ENCODE measurements at regions of chr19 and their contacts with region 1.

Region 1: GRCh38 chr19:6021878-6022569 is 44.1 kb upstream of the RANBP3 start:
- DNase-seq: peak; percentile 21
- H3K4me3 ChIP-seq: no peak overlapping the region
- H3K27ac ChIP-seq: no peak overlapping the region
- H3K27me3 ChIP-seq: peaks cover 4% of the 10 kb centered on the region
- CTCF ChIP-seq: peak; percentile 60

Region 2: GRCh38 chr19:5790573-5791520 is 231.2 kb before region 1 on chr19 and contains the start of gene DUS3L:
- CTCF ChIA-PET with region 1: interaction called, 15 read pairs
- POLR2A ChIA-PET with region 1: no interaction called
- DNase-seq: peak; percentile 96
- H3K4me3 ChIP-seq: peak within 1 kb of the TSS; percentile 99
- H3K27ac ChIP-seq: peak within 1 kb of the TSS; percentile 95
- H3K27me3 ChIP-seq: no peaks in the 10 kb centered on the region
- CTCF ChIP-seq: no peak
- polyA plus RNA-seq, gene DUS3L: 7.8 and 8.0 TPM in 2 replicates

Region 3: GRCh38 chr19:5987077-5987818 is 34.8 kb before region 1 on chr19:
- CTCF ChIA-PET with region 1: interaction called, 38 read pairs
- POLR2A ChIA-PET with region 1: interaction called, 3 read pairs
- DNase-seq: peak; percentile 51
- H3K4me3 ChIP-seq: peak overlapping the region; percentile 53
- H3K27ac ChIP-seq: no peak overlapping the region
- H3K27me3 ChIP-seq: no peaks in the 10 kb centered on the region
- CTCF ChIP-seq: peak; percentile 95

Region 4: GRCh38 chr19:6011794-6012193 is 10.2 kb before region 1 on chr19:
- CTCF ChIA-PET with region 1: interaction called, 10 read pairs
- POLR2A ChIA-PET with region 1: no interaction called
- DNase-seq: no peak
- H3K4me3 ChIP-seq: no peak overlapping the region
- H3K27ac ChIP-seq: peak overlapping the region; percentile 31
- H3K27me3 ChIP-seq: no peaks in the 10 kb centered on the region
- CTCF ChIP-seq: no peak

Region 5: DNA sequence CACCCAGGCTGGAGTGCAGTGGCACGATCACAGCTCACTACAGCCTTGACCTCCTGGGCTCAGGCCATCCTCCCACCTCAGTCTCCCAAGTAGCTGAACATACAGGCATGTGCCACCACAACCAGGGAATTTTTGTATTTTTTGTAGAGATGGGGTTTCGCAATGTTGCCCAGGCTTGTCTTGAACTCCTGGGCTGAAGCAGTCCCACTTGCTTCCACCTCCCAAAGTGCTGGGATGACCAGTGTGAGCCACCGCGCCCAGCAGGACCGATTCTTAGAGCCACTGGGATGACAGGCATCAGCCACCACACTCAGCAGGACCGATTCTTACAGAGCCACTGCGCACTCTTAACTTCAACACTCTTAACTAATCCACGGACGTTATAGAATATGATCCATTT is 10.8 kb after region 1 on chr19:
- CTCF ChIA-PET with region 1: interaction called, 10 read pairs
- POLR2A ChIA-PET with region 1: no interaction called
- DNase-seq: no peak
- H3K4me3 ChIP-seq: no peak overlapping the region
- H3K27ac ChIP-seq: no peak overlapping the region
- H3K27me3 ChIP-seq: no peaks in the 10 kb centered on the region
- CTCF ChIP-seq: no peak

Measured in AG04450 (cell line).